ENCODE measurements at regions of chr18 and their contacts with region 1.

Region 1: GRCh38 chr18:2547477-2548087 is 23.7 kb downstream of the METTL4 start:
- DNase-seq: no peak

Region 2: GRCh38 chr18:1585879-1586488 is 961.6 kb before region 1 on chr18:
- intact Hi-C with region 1: loop called in 1 of 2 experiments (anchors 10 kb)
- DNase-seq: no peak

Region 3: DNA sequence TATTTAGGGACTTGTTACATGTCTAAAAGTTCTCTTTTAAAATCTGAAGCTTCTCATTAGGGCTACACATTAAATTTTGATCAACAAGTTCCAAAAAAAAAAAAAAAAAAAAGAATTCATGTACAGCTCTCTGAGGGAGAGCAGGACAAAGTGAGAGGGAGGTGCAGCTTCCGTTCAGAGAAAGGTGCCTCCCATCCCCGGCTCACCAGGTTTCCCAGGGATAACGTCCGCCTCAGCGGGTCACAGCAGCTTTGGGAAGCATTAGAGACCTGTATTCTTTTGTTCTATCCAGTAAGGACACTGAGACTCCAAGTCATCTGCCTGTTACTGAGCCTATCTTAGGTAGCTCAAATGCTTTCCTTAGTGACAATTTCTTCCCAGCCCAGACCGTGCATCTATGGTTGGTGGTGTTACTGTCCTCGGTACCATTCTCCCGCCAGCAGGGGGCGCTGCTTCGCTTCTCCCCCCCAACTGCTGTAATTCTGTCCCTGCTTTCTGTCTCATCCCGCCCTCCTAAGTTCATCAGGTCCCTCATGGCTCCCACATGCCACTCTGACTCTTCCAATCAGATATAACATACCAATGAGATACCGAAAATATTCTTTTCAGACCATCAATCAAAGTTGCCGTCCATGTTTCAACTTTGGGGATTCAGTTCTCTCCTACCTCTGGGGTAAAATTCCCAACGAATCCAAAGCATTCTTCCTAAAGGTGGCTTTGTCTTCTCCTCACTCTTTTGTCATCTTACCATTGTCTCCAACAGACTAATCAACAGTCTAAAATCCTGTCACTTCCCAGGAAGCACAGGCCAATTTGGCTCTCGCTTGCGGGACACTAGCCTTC is 442.7 kb before region 1 on chr18:
- intact Hi-C with region 1: loop called in 1 of 2 experiments (anchors 5 kb)
- DNase-seq: peak; percentile 81

Region 4: GRCh38 chr18:2655178-2655953 is 107.8 kb after region 1 on chr18 and contains the start of gene SMCHD1:
- intact Hi-C with region 1: no loop called
- DNase-seq: peak; percentile 96
- total RNA-seq, gene SMCHD1: 50.8 to 54.2 TPM

Region 5: DNA sequence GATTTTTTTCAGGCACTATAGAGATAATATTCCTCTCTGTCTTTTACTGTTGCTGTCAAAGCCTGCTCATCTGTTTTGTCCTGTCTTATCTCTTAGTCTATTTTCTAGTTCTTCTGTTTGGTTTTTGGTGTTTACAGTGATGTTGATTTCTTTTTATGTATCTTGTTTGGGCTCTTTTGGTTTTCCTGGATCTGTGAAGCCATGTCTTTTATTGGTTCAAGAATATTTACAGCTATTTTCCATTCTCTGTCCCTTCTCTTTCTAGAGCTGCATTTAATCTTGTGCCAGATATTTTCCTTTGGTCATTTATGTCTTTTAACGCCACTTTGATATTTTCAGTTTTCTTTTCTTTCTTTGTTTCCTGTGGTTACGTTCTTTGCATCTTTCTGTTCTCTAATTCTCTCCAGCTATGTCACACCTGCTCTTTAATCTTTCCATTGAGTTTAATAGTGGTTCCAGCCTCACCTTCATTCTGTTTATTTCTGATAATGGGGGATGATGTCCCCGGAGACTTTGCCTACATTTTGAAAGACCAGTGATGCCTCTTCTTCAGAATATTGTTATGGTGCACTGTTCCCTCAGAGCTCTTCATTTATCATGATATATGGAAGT is 139.9 kb after region 1 on chr18:
- intact Hi-C with region 1: no loop called
- DNase-seq: no peak